ENCODE measurements at regions of chr5 and their contacts with region 1.

Region 1: DNA sequence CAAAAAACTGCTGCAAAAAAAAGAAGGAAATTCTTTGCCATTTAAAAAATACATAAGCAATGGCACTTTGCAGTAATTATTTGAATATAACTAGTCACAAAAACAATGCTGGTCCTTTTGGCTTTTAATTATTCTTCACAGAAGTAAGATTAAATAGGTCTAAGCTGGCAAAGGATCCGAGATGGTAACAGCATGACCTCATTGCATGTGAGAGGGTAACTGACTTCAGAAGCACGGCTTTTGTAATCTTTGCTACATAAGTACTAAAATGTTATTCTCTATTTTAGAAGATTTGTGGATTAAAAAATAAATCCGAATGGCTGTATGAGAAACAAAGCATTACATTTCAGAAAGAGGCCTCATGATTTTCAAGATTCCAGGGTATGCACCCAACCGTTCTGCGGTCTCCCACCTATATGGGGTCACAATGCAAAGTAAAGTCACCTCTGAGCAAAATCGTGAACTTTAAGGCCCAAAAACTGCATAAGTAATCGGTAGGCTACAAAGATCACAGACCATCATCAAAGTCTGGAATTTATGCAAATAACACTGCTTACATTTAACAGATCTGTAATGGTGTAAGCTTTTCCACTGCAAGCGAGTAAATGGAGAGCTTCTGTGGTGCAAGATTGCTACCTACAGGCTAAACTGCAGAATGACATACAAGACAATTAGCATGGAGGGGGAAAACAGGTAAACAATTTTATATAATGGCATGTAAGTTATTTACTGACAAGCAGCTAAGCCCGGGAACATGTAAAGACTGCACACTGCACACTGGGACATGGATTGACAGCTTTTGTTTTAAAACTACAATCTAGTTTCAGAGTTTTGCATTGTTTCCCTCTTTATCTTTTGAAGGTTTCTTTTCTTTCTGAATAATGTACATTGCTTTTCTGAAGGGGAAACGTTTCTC is 231.6 kb downstream of the SLF1 start:
- DNase-seq: peak; percentile 81
- H3K4me3 Mint-ChIP-seq: no peak overlapping the region
- H3K27ac Mint-ChIP-seq: no peak overlapping the region
- H3K4me1 Mint-ChIP-seq: peaks cover 6% of the 10 kb centered on the region
- H3K27me3 Mint-ChIP-seq: peaks cover 11% of the 10 kb centered on the region

Region 2: GRCh38 chr5:93582677-93583438 is 1267.2 kb before region 1 on chr5 and contains the start of gene NR2F1:
- intact Hi-C with region 1: loop called (anchors 5 kb)
- DNase-seq: no peak
- H3K4me3 Mint-ChIP-seq: no peak within 1 kb of the TSS
- H3K27ac Mint-ChIP-seq: no peak within 1 kb of the TSS
- H3K4me1 Mint-ChIP-seq: peaks cover 18% of the 10 kb centered on the region
- H3K27me3 Mint-ChIP-seq: peaks cover 45% of the 10 kb centered on the region
- total RNA-seq, gene NR2F1: not detected in 2 replicates

Region 3: DNA sequence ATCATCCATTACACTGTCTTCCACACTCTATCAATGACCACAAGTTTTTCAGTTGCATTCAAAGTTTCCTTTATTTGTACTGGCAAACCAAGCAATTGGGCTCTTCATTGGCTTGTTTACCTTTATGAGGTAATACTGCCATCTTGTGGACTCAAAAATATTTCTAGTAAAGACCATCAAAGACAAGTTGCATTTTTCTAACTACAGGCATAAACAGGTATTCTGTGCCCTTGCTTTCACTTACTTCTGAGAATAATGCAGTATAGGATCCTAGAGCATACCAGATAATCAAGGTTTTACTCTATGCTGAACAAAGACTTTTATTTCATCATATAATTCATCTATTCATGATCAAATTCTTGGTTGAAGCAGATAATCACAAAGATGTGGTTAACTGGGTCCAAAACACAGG is 934.9 kb before region 1 on chr5:
- intact Hi-C with region 1: loop called (anchors 10 kb)
- DNase-seq: no peak
- H3K4me3 Mint-ChIP-seq: no peak overlapping the region
- H3K27ac Mint-ChIP-seq: no peak overlapping the region
- H3K4me1 Mint-ChIP-seq: no peaks in the 10 kb centered on the region
- H3K27me3 Mint-ChIP-seq: no peaks in the 10 kb centered on the region

Region 4: GRCh38 chr5:94524841-94525697 is 325.0 kb before region 1 on chr5:
- intact Hi-C with region 1: loop called (anchors 1 kb)
- DNase-seq: peak; percentile 78
- H3K4me3 Mint-ChIP-seq: no peak overlapping the region
- H3K27ac Mint-ChIP-seq: no peak overlapping the region
- H3K4me1 Mint-ChIP-seq: no peaks in the 10 kb centered on the region
- H3K27me3 Mint-ChIP-seq: no peaks in the 10 kb centered on the region

Region 5: DNA sequence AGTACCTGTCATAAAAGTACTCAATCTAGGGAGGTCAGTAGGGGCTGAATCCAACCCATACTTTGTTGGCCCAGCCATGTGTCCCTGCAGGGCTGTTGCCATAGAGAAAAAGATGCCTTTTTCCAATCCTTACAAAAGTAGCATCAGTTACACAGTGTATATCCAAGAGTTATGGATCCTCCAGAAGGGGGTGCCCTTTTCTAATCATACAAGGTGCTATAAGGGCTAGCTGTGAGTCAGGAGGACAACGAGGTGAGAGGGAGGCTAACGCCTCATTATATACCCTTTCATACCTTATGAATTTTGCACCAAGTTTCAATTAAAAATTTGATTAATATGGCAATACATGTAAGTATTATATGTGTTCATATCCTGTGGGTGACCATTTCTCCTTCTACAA is 236.5 kb before region 1 on chr5:
- intact Hi-C with region 1: loop called (anchors 1 kb)
- DNase-seq: no peak
- H3K4me3 Mint-ChIP-seq: no peak overlapping the region
- H3K27ac Mint-ChIP-seq: no peak overlapping the region
- H3K4me1 Mint-ChIP-seq: peaks cover 17% of the 10 kb centered on the region
- H3K27me3 Mint-ChIP-seq: no peaks in the 10 kb centered on the region

Region 6: GRCh38 chr5:94618493-94619328 is 231.4 kb before region 1 on chr5 and contains the starts of genes KIAA0825 and SLF1:
- intact Hi-C with region 1: loop called (anchors 1 kb)
- DNase-seq: peak; percentile 96
- H3K4me3 Mint-ChIP-seq: peak within 1 kb of the TSS; percentile 95
- H3K27ac Mint-ChIP-seq: peak within 1 kb of the TSS; percentile 91
- H3K4me1 Mint-ChIP-seq: peaks cover 32% of the 10 kb centered on the region
- H3K27me3 Mint-ChIP-seq: no peaks in the 10 kb centered on the region
- total RNA-seq, gene KIAA0825: 0.28 and 0.54 TPM in 2 replicates
- total RNA-seq, gene SLF1: 11.5 and 13.7 TPM in 2 replicates

Region 7: GRCh38 chr5:94740286-94740685 is 109.8 kb before region 1 on chr5:
- intact Hi-C with region 1: loop called (anchors 1 kb)
- DNase-seq: no peak
- H3K4me3 Mint-ChIP-seq: no peak overlapping the region
- H3K27ac Mint-ChIP-seq: no peak overlapping the region
- H3K4me1 Mint-ChIP-seq: peaks cover 2% of the 10 kb centered on the region
- H3K27me3 Mint-ChIP-seq: peaks cover 2% of the 10 kb centered on the region

Measured in activated CD4-positive, alpha-beta T cell treated with anti-CD3 and anti-CD28 coated beads, Interleukin-2, amount 10 ng/mL, durations not matched to agents 24 days and 14 days (primary cell).